IMR-90 (cell line): ENCODE measurements at regions of chr4 and their contacts with region 1.

Region 1: GRCh38 chr4:113881256-113881655 is 98.2 kb downstream of the ARSJ start:
- DNase-seq: peak; percentile 62
- ATAC-seq: peak; percentile 52; the same call in 1 of the 2 replicates
- H3K4me3 ChIP-seq: no peak overlapping the region
- H3K27ac ChIP-seq: no peak overlapping the region
- H3K4me1 ChIP-seq: peaks cover 4% of the 10 kb centered on the region
- H3K27me3 ChIP-seq: no peaks in the 10 kb centered on the region
- CTCF ChIP-seq: no peak
- POLR2A ChIP-seq: no peak
- RAD21 ChIP-seq: no peak

Region 2: DNA sequence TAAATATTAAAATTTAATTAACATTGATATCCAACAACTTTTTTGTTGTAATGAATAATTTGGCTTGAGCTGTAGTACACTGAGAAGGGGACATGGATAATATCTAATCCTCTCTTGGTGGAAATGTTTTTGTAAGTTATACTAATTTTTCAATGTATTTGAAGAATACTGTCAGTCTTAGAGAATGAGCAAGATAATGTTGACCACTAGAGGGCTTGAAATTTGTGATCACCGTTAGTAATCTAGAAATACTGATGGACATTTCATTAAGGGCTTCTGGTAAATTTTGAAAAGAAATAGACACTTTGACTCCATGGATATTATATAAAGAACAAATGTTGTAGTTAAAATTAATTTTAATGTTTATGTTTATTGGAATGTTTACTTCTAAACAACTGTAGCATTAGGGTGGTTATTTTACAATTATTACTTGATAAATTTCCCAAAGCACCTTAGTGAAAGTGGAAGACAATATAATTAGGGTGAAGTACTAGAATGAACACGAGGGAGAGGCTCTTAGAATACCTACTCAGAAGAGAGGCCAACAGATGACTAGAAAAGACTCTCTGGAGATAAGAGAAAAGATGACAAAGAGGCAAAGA is 99.7 kb before region 1 on chr4:
- CTCF ChIA-PET with region 1: no interaction called
- POLR2A ChIA-PET with region 1: no interaction called
- dilution Hi-C with region 1: no loop called
- in situ Hi-C with region 1: no loop called
- intact Hi-C with region 1: loop called (anchors 5 kb)
- DNase-seq: peak; percentile 55
- ATAC-seq: no peak
- H3K4me3 ChIP-seq: no peak overlapping the region
- H3K27ac ChIP-seq: no peak overlapping the region
- H3K4me1 ChIP-seq: peaks cover 4% of the 10 kb centered on the region
- H3K27me3 ChIP-seq: no peaks in the 10 kb centered on the region
- CTCF ChIP-seq: peak; percentile 66
- POLR2A ChIP-seq: no peak
- RAD21 ChIP-seq: peak; percentile 59

Region 3: DNA sequence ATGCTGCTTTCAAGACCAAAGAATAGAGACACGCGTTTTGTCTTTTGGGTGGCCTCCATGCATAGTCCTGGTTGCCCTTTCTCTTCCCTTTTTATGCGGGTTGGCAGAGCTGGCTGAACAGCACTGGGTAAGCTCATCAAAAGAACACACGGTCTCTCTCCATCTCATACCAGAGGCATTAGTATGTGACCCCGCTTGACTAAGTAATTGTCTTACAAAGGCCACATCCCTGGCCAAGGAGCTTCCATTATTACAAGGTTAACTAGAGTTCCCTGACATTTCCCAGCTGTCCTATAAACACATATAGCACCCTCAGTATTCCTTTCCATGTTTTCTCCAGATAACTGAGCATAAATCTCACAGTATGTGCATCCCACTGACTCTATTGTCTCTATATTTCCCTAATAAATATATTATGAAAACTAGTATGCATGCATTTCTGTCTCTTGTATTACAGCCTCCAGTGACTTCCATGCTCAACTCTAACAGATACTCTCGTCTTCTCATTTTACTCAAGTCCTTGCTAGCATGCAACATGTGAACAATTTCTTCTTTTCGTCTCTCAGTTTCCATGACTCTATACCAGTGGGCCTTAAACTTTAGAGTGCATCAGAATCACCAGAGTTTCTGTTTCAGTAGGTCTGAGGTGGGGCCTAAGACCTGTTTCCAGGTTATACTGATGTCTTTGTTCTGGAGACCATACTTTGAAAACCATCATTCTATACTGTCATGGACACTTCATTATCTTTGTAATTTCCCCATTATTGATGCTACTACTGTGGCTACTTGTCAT is 345.9 kb after region 1 on chr4:
- CTCF ChIA-PET with region 1: no interaction called
- POLR2A ChIA-PET with region 1: no interaction called
- dilution Hi-C with region 1: no loop called
- in situ Hi-C with region 1: no loop called
- intact Hi-C with region 1: no loop called
- DNase-seq: peak; percentile 34
- ATAC-seq: no peak; the same call in none of the 2 replicates
- H3K4me3 ChIP-seq: no peak overlapping the region
- H3K27ac ChIP-seq: no peak overlapping the region
- H3K4me1 ChIP-seq: peaks cover 2% of the 10 kb centered on the region; the same call in 1 of the 2 replicates
- H3K27me3 ChIP-seq: no peaks in the 10 kb centered on the region
- CTCF ChIP-seq: no peak
- POLR2A ChIP-seq: no peak
- RAD21 ChIP-seq: no peak